Esophagus squamous epithelium (tissue), 5 donors: ENCODE measurements at regions of chr10 and their contacts with region 1.

Region 1: DNA sequence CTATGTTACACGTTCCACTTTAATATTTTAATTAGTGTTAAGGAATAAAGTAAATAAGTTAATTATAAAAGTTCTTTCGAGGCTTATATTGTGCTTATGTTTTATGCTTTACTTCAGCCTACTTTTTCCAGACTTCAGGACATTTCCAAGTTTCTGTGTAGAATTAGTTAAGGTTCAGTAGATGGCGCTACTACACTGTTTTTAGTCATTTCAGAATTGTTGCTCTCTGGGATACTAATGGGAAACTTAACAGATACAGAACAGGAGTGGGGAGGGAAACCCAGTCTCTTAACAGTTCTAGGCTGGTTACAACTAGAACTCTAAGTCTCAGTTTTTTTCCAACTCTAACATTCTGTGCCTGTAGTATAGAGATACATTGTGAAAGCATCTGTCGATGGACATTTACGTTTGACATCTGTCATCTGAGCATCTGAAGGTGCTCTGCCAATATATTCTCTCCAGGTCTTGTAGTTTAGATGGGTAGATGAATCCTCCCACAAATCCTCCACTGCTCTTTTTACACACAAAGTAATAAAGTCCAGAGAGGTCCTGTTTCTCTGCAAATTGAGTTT is 56.8 kb upstream of the FAM171A1 start:
- DNase-seq: no peak
- H3K4me3 ChIP-seq: no peak overlapping the region
- H3K27ac ChIP-seq: no peak overlapping the region
- H3K4me1 ChIP-seq: no peaks in the 10 kb centered on the region
- H3K27me3 ChIP-seq: no peaks in the 10 kb centered on the region
- CTCF ChIP-seq: peak in 4 of 6 experiments; percentile 23 to 45 (median 36)
- POLR2A ChIP-seq: no peak

Region 2: GRCh38 chr10:15744217-15744865 is 316.4 kb after region 1 on chr10:
- intact Hi-C with region 1: loop called (anchors 10 kb)
- DNase-seq: no peak
- H3K4me3 ChIP-seq: no peak overlapping the region
- H3K27ac ChIP-seq: no peak overlapping the region
- H3K4me1 ChIP-seq: peaks cover 0 to 2% (median 0%) of the 10 kb centered on the region in 3 donors
- H3K27me3 ChIP-seq: no peaks in the 10 kb centered on the region
- CTCF ChIP-seq: peak in 4 of 6 experiments; percentile 13 to 43 (median 27)
- POLR2A ChIP-seq: no peak